Breast epithelium (tissue), 4 donors: ENCODE measurements at regions of chr4 and their contacts with region 1.

Region 1: DNA sequence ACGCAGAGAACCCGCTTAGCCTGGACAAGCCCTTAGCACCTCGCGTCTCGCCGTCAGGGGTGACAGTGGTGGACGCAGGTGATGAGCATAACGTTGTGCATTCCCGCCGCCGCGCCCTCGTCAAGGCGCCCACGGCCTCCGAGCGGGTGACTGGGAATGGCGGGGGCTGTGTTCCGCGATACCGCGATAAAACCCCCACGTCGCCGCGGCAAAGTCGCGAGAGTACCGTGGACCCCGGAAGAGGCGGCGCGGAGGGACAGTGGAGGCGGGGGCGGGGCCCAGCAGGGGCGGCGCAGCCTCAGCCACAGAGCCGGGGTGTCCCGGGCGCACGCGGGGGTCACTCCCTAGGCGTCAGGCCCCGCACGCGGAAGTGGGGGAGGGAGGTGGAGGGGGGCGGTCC is 53.8 kb downstream of the ZFYVE28 start:
- DNase-seq: peak in 1 of 2 donors; percentile 51
- H3K4me3 ChIP-seq: peak overlapping the region; percentile 43 to 81 (median 69)
- H3K27ac ChIP-seq: peak overlapping the region; percentile 5 to 62
- H3K4me1 ChIP-seq: peaks cover 0 to 6% of the 10 kb centered on the region in 2 donors
- H3K27me3 ChIP-seq: no peaks in the 10 kb centered on the region
- CTCF ChIP-seq: no peak
- POLR2A ChIP-seq: no peak

Region 2: DNA sequence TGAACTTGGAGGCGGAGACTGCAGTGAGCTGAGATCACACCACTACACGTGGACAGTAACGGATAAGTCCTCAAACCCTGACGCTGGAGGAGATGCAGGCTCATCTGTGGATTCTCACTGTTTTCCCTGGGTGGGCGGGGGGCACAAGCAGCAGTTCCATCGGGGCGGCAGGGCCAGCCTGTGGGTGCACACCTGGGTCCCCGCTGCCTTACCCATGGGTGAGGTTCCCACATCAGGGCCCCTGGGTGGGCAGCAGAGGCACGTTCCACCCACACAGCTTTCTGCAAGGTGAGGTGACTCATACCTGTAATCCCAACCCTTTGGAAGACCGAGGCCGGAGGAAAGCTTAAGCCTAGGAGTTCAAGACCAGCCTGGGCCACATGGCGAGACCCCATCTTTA is 46.2 kb before region 1 on chr4:
- intact Hi-C with region 1: no loop called
- DNase-seq: peak in 1 of 2 donors; percentile 9
- H3K4me3 ChIP-seq: no peak overlapping the region
- H3K27ac ChIP-seq: no peak overlapping the region
- H3K4me1 ChIP-seq: no peaks in the 10 kb centered on the region
- H3K27me3 ChIP-seq: no peaks in the 10 kb centered on the region
- CTCF ChIP-seq: no peak
- POLR2A ChIP-seq: no peak

Region 3: DNA sequence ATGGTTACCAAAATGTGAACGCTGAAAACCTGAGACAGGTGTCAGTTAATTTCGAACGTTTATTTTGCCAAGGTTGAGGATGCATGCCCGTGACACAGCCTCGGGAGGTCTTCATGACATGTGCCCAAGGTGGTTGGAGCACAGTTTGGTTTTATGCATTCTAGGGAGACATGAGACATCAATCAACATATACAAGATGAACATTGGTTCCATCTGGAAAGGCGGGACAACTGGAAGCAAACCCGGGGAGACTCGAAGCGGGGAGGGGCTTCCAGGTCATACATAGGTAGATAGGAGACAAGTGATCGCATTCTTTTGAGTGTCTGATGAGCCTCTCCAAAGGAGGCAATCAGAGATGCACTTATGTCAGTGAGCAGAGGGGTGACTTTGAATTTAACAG is 417.3 kb after region 1 on chr4:
- intact Hi-C with region 1: loop called (anchors 5 kb)
- DNase-seq: no peak
- H3K4me3 ChIP-seq: no peak overlapping the region
- H3K27ac ChIP-seq: no peak overlapping the region
- H3K4me1 ChIP-seq: no peaks in the 10 kb centered on the region
- H3K27me3 ChIP-seq: no peaks in the 10 kb centered on the region
- CTCF ChIP-seq: no peak
- POLR2A ChIP-seq: no peak